Heart right ventricle (tissue), 16 donors: ENCODE measurements at regions of chr11 and their contacts with region 1.

Region 1: DNA sequence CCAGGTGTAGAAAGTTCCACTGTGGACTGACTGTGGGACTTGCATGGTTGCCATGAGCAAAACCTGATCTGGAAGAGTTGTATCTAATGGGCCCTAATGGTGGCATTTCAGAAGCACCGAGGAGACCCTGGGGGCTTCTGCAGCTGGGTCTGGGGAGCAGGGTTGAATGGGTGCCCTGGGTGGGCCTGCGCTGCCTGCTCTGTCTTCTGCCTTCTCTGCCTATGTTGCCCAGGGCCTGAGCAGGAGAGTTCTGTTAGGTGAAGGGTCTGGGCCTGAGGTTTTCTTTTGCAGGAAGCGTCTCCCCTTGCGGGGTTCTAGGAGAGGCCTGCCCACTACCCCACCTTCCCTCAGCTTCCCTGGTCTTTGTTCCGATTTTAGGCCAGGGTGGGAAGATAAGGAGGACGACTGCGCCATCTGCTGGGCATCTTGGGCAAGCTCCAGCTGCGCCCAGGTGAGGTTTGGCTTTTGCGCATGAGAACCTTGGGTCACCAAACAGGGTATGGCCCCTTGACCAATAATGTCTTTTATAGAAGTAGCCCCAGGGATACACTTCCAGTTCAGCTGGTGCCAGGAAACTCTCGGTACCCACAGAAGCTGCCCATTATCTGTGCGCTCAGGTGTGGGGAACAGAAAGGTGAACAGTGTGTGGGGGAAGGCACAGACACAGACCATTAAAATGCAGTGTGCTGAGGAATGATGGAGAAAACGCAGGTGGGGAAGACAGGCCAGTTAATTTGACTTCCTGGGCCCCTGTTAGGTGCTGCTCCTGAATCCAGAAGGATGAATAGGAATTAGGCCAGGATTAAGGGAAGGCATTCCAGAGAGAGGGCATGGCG is 23.2 kb downstream of the COMMD9 start:
- DNase-seq: peak; percentile 20 to 56
- ATAC-seq: peak; percentile 53 to 78 (median 66)
- H3K4me3 ChIP-seq: no peak overlapping the region
- H3K27ac ChIP-seq: no peak overlapping the region
- H3K4me1 ChIP-seq: peaks cover 0 to 6% (median 0%) of the 10 kb centered on the region in 9 donors
- H3K27me3 ChIP-seq: peaks cover 0 to 24% (median 0%) of the 10 kb centered on the region in 7 donors
- CTCF ChIP-seq: peak; percentile 48 to 88 (median 77)

Region 2: DNA sequence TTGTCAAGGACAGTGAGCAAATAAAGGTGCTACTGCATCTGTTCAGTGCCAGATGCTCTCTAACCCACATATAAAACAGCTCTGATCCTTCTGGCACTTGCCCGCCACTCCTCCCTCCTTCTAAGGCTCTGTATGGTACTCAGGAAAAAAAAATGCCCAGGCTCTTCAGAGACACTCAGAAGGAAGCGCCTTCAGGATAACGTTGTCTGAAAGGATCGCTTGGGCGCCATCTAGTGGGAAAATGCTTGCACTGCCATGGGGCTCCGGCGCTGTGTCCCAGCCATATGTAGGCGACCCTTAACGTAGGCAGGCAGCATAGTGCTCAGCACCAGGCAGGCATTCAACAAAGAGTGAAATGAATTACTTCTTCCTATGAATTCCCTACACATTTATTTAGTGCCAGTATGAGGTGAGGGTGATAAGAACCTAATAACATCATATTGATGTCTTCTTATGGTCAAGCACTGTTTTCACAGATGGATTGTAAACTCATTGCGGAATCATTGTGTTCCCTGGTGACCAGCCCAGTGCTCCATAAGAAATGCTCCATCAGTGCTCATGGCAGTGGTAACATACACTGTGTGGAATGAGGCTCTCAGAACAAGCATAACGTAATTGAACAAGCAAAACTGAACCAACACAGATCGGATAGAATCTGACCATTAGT is 780.2 kb before region 1 on chr11:
- intact Hi-C with region 1: loop called in 4 of 10 experiments (anchors 5 to 10 kb)
- DNase-seq: peak; percentile 65 to 68
- ATAC-seq: peak; percentile 75 to 90 (median 88)
- H3K4me3 ChIP-seq: no peak overlapping the region
- H3K27ac ChIP-seq: no peak overlapping the region
- H3K4me1 ChIP-seq: peaks cover 0 to 12% (median 0%) of the 10 kb centered on the region in 9 donors
- H3K27me3 ChIP-seq: peaks cover 0 to 15% (median 8%) of the 10 kb centered on the region in 7 donors
- CTCF ChIP-seq: peak; percentile 76 to 94 (median 90)

Region 3: DNA sequence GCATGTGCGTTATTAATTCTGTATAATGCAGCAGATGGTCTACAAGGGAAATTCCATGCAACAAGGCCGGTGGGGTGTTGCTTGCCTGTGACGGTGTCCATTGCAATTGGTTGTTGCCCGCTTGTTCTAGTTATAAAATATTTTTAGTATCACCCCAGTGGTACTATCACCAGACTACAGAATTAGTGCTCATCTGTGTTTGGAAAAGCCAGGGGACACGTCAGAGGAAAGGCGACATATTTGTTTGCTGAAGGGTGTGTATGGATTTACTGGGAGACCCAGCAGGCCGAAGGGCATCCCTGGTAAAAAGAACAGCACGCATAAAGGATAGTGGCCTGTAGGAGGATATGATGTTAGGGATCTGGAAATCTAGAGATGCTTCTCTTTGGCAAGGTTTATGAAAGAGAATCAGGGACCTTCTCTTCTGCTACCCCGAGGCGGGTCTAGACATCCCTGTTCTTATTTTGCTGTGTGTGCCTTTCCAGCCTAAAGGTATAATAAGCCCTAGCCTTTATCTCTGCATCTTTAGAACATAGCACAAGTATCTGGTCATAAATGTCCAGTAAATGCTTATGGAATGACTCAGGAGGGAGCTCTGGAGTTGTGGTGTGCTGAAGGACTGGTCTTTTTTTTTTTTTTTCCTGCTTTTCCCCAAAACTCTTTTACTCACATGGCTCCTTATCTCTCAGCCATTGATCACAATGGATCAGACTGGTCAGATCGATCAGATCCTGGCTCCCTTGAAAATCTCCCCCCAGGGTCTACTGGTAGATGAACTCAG is 231.3 kb before region 1 on chr11:
- intact Hi-C with region 1: loop called in 1 of 10 experiments (anchors 10 kb)
- DNase-seq: no peak
- ATAC-seq: no peak
- H3K4me3 ChIP-seq: no peak overlapping the region
- H3K27ac ChIP-seq: no peak overlapping the region
- H3K4me1 ChIP-seq: peaks cover 0 to 28% (median 0%) of the 10 kb centered on the region in 9 donors
- H3K27me3 ChIP-seq: peaks cover 0 to 3% (median 0%) of the 10 kb centered on the region in 7 donors
- CTCF ChIP-seq: no peak

Region 4: GRCh38 chr11:36041988-36042611 is 223.9 kb before region 1 on chr11:
- intact Hi-C with region 1: loop called in 3 of 10 experiments (anchors 5 to 10 kb)
- DNase-seq: no peak
- ATAC-seq: peak in 2 of 8 donors; percentile 50 to 58
- H3K4me3 ChIP-seq: no peak overlapping the region
- H3K27ac ChIP-seq: no peak overlapping the region
- H3K4me1 ChIP-seq: peaks cover 0 to 7% (median 0%) of the 10 kb centered on the region in 9 donors
- H3K27me3 ChIP-seq: no peaks in the 10 kb centered on the region
- CTCF ChIP-seq: peak; percentile 15 to 64 (median 53)

Region 5: GRCh38 chr11:36149538-36150242 is 116.3 kb before region 1 on chr11:
- intact Hi-C with region 1: loop called in 1 of 10 experiments (anchors 10 kb)
- DNase-seq: peak in 1 of 2 donors; percentile 23
- ATAC-seq: peak; percentile 38 to 96 (median 64)
- H3K4me3 ChIP-seq: no peak overlapping the region
- H3K27ac ChIP-seq: peak overlapping the region in 1 of 10 donors; percentile 66
- H3K4me1 ChIP-seq: peaks cover 0 to 37% (median 4%) of the 10 kb centered on the region in 9 donors
- H3K27me3 ChIP-seq: peaks cover 0 to 16% (median 0%) of the 10 kb centered on the region in 7 donors
- CTCF ChIP-seq: peak in 5 of 9 donors; percentile 36 to 48 (median 38)